Naive thymus-derived CD4-positive, alpha-beta T cell (primary cell): ENCODE measurements at regions of chr19 and their contacts with region 1.

Region 1: DNA sequence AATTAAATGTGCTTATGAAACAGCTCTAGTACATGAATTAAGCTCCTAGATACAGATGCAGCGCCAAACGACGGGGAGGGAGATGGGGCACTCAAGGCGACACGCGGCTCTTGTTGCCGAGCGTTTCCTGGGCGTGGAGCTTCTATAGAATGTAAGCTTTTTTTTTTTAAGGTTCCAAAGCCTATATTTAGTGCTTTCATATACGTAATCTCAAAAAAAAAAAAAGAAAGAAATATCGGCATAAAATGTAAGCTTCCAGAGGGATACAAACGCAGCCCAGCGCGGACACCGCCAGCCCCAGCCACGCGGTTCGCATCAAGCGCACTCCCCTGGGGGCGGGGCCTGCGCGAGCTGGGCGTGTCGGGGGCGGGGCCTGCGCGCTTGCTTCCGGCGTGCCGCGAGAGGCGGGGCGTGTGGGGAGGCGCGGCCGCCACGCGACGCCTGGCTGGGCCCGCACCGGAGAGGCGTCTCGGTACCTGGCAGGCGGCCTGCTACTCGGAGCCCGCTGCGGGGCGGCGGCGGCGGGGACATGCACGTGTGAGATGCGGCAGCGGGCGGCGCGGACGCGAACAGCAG is at the start of gene URI1:
- DNase-seq: peak; percentile 86 to 99 (median 93)
- ATAC-seq: peak; percentile 98
- H3K4me3 ChIP-seq: peak within 1 kb of the TSS; percentile 95
- H3K4me3 Mint-ChIP-seq: peak within 1 kb of the TSS; percentile 92 to 99 (median 96)
- H3K27ac ChIP-seq: peak within 1 kb of the TSS; percentile 88
- H3K27ac Mint-ChIP-seq: peak within 1 kb of the TSS; percentile 86 to 96 (median 94)
- H3K4me1 ChIP-seq: peaks cover 27 to 35% of the 10 kb centered on the region in 2 donors
- H3K4me1 Mint-ChIP-seq: peaks cover 35 to 55% (median 47%) of the 10 kb centered on the region in 7 donors
- H3K27me3 ChIP-seq: no peaks in the 10 kb centered on the region
- H3K27me3 Mint-ChIP-seq: peaks cover 0 to 4% (median 0%) of the 10 kb centered on the region in 5 donors
- total RNA-seq, gene URI1: 55.0 to 106 (median 71.8) TPM

Region 2: GRCh38 chr19:29040951-29041350 is 901.0 kb before region 1 on chr19:
- CTCF ChIA-PET with region 1: no interaction called
- POLR2A ChIA-PET with region 1: no interaction called
- intact Hi-C with region 1: no loop called
- DNase-seq: no peak
- ATAC-seq: no peak
- H3K4me3 ChIP-seq: no peak overlapping the region
- H3K4me3 Mint-ChIP-seq: no peak overlapping the region
- H3K27ac ChIP-seq: no peak overlapping the region
- H3K27ac Mint-ChIP-seq: no peak overlapping the region
- H3K4me1 ChIP-seq: no peaks in the 10 kb centered on the region
- H3K4me1 Mint-ChIP-seq: no peaks in the 10 kb centered on the region
- H3K27me3 ChIP-seq: no peaks in the 10 kb centered on the region
- H3K27me3 Mint-ChIP-seq: peaks cover 0 to 30% (median 10%) of the 10 kb centered on the region in 5 donors

Region 3: DNA sequence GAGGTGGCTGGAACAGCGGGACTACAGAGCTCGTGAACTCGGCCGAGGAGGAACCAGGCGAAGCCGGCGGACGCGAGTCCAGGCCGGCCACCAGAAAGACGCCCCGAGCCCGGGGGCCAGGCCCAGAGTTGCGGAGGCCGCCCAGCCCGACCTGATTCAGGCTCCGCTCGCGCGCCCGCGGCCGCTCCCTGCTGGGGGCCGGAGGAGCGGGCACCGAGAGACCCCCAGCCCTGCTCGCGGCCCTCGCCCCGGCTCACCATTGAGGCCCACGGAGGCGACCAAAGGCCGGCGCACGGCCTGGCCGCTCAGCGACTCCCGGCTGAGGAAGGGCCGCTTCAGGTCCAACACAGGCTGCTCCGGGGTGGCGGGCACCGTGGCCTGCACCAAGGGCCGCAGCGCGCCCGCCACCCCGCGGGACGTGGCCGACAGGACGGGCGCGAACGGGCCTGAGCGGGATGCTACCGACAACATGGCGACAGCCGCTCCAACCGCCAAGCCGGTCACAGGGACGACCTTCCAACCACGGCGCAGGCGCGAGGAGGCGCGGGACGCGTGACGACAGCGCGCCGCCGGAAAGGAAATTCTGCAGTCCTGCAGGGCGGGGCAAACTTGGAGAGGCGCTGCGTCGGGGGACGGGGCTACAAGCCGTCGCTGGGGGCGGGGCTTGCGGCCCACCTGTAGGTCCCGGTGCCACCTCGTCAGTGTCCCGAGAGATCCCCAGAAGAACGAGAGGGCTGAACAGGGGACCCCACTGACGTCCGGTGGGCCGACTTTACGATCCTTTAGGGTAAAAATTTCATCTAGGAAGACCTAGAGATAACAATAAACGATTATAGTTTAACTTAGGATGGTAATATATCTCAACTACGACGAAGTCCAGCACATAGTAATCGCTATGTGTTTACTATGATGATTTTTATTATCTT is 729.0 kb before region 1 on chr19 and contains the start of gene UQCRFS1:
- CTCF ChIA-PET with region 1: no interaction called
- POLR2A ChIA-PET with region 1: no interaction called
- intact Hi-C with region 1: loop called (anchors 1 to 5 kb)
- DNase-seq: peak; percentile 92 to 96 (median 95)
- ATAC-seq: peak; percentile 97
- H3K4me3 ChIP-seq: peak within 1 kb of the TSS; percentile 94
- H3K4me3 Mint-ChIP-seq: peak within 1 kb of the TSS; percentile 89 to 99 (median 96)
- H3K27ac ChIP-seq: peak within 1 kb of the TSS; percentile 96
- H3K27ac Mint-ChIP-seq: peak within 1 kb of the TSS; percentile 88 to 99 (median 98)
- H3K4me1 ChIP-seq: peaks cover 9 to 34% of the 10 kb centered on the region in 2 donors
- H3K4me1 Mint-ChIP-seq: peaks cover 32 to 54% (median 50%) of the 10 kb centered on the region in 7 donors
- H3K27me3 ChIP-seq: no peaks in the 10 kb centered on the region
- H3K27me3 Mint-ChIP-seq: peaks cover 0 to 12% (median 4%) of the 10 kb centered on the region in 5 donors
- total RNA-seq, gene UQCRFS1: 16.1 to 28.3 (median 23.9) TPM

Region 4: GRCh38 chr19:29671393-29672160 is 270.3 kb before region 1 on chr19:
- CTCF ChIA-PET with region 1: no interaction called
- POLR2A ChIA-PET with region 1: interaction called, 5 read pairs
- intact Hi-C with region 1: loop called in 1 of 2 experiments (anchors 5 kb)
- DNase-seq: peak in 8 of 9 donors; percentile 65 to 83 (median 76)
- ATAC-seq: peak; percentile 72
- H3K4me3 ChIP-seq: peak overlapping the region; percentile 50
- H3K4me3 Mint-ChIP-seq: peak overlapping the region; percentile 78 to 93 (median 82)
- H3K27ac ChIP-seq: peak overlapping the region; percentile 94
- H3K27ac Mint-ChIP-seq: peak overlapping the region; percentile 90 to 100 (median 98)
- H3K4me1 ChIP-seq: peaks cover 95 to 96% of the 10 kb centered on the region in 2 donors
- H3K4me1 Mint-ChIP-seq: peaks cover 60 to 96% (median 83%) of the 10 kb centered on the region in 7 donors
- H3K27me3 ChIP-seq: no peaks in the 10 kb centered on the region
- H3K27me3 Mint-ChIP-seq: no peaks in the 10 kb centered on the region

Region 5: DNA sequence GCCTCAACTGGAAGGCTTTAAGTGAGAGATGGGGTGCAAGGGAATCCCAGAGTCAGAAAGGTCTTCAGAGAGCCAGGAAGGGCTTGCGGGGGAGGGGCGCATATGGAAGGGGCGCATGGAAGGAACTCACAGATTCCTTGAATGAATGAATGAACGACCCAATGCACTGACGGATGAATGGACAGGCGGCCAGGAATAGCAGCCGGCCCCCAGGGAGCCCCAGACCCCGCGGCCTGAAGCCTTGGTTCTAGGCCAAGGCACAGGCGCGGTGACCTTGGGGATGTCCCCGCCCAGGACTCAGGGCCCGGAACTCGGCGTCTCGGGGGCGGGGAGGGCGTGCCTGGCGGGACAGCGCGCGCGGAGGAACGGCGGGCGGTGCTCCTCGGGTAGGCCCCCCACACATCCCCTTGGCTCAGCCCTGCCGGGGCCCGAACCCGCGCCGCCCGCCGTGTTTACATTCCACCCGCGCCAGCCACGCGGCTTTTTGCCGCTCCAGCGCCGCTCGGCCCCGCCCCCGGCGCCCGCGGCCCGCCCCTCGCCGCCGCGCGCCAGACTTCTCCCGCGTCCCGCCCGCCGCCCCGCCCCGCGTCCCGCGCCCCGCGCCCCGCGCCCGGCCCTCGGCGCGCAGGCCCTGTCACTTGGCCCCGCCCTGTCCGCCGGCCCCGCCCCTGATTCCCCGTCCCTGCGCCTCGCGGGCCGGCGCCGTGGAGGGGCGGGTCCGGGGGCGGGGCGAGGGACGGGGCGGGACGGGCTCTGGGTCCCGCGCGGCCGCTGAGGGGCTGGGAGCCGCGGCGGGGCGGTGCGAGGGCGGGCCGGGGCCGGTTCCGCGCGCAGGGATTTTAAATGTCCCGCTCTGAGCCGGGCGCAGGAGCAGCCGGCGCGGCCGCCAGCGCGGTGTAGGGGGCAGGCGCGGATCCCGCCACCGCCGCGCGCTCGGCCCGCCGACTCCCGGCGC is 130.5 kb before region 1 on chr19 and contains the start of gene CCNE1:
- CTCF ChIA-PET with region 1: no interaction called
- POLR2A ChIA-PET with region 1: no interaction called
- intact Hi-C with region 1: loop called (anchors 1 kb)
- DNase-seq: peak; percentile 85 to 98 (median 91)
- ATAC-seq: peak; percentile 98
- H3K4me3 ChIP-seq: peak within 1 kb of the TSS; percentile 48
- H3K4me3 Mint-ChIP-seq: peak within 1 kb of the TSS; percentile 83 to 96 (median 90)
- H3K27ac ChIP-seq: peak within 1 kb of the TSS; percentile 69
- H3K27ac Mint-ChIP-seq: peak within 1 kb of the TSS; percentile 56 to 94 (median 85)
- H3K4me1 ChIP-seq: no peaks in the 10 kb centered on the region
- H3K4me1 Mint-ChIP-seq: peaks cover 0 to 36% (median 11%) of the 10 kb centered on the region in 7 donors
- H3K27me3 ChIP-seq: no peaks in the 10 kb centered on the region
- H3K27me3 Mint-ChIP-seq: no peaks in the 10 kb centered on the region
- total RNA-seq, gene CCNE1: 5.3 to 36.1 (median 6.6) TPM

Region 6: DNA sequence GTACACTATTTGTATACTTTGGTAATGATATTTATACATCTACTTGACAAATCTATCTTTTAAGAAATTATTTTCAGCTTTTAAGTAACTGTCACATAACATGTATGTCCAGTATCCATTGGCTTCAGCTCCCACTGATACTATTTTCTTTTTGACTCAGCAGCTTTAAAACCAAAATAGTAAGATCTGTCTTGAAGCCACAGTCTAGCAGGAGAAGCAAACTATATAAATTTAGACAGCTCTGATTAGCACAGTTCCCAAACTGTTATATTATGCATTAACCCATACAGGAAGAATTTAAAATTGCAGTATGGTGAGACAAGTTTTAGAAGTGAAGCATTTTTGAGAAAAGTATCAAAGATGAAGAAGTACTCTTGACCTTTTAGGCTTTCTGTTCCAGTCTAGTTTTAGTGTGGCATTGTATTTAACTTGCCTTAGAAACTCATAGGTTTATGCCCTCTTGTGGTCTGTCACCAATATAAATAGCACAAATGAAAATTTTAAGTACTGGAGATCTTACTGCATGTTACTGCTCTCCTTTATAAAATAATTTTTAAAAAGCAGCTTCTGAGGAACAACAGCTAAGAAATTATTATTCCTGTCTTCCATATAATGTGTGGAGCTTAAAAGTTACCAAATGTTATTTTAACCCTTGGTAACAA is 24.8 kb after region 1 on chr19:
- CTCF ChIA-PET with region 1: interaction called, 3 read pairs
- POLR2A ChIA-PET with region 1: interaction called, 7 read pairs
- intact Hi-C with region 1: loop called in 1 of 2 experiments (anchors 1 kb)
- DNase-seq: peak in 1 of 9 donors; percentile 15
- ATAC-seq: peak; percentile 42
- H3K4me3 ChIP-seq: no peak overlapping the region
- H3K4me3 Mint-ChIP-seq: peak overlapping the region in 6 of 10 donors; percentile 1 to 76 (median 49)
- H3K27ac ChIP-seq: peak overlapping the region; percentile 27
- H3K27ac Mint-ChIP-seq: peak overlapping the region in 3 of 9 donors; percentile 3 to 32 (median 5)
- H3K4me1 ChIP-seq: peaks cover 31 to 44% of the 10 kb centered on the region in 2 donors
- H3K4me1 Mint-ChIP-seq: peaks cover 41 to 97% (median 88%) of the 10 kb centered on the region in 7 donors
- H3K27me3 ChIP-seq: no peaks in the 10 kb centered on the region
- H3K27me3 Mint-ChIP-seq: no peaks in the 10 kb centered on the region

Region 7: DNA sequence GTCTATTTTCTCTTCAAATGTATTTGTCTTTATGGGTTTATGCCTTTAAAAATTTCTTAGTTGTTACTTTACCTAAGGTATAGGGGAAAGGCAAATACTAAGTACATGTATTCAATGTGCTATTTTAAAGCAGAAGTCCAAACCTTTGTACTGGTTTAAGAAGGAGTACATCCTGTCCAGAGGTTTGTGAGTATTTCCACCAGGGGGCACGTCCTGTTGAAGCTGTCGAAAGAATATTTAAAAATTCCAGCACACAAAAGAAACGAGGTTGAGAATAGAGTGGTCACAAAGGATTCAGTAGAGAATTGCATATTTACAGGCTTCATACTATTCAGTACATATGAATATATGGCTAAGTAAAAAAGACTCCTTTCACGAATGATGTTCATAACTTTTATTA is 59.9 kb after region 1 on chr19:
- CTCF ChIA-PET with region 1: no interaction called
- POLR2A ChIA-PET with region 1: interaction called, 3 read pairs
- intact Hi-C with region 1: loop called (anchors 5 kb)
- DNase-seq: no peak
- ATAC-seq: no peak
- H3K4me3 ChIP-seq: no peak overlapping the region
- H3K4me3 Mint-ChIP-seq: peak overlapping the region in 1 of 10 donors; percentile 47
- H3K27ac ChIP-seq: no peak overlapping the region
- H3K27ac Mint-ChIP-seq: peak overlapping the region in 1 of 9 donors; percentile 23
- H3K4me1 ChIP-seq: peaks cover 8 to 17% of the 10 kb centered on the region in 2 donors
- H3K4me1 Mint-ChIP-seq: peaks cover 42 to 95% (median 77%) of the 10 kb centered on the region in 7 donors
- H3K27me3 ChIP-seq: no peaks in the 10 kb centered on the region
- H3K27me3 Mint-ChIP-seq: no peaks in the 10 kb centered on the region

Region 8: GRCh38 chr19:30029721-30030510 is 88.0 kb after region 1 on chr19:
- CTCF ChIA-PET with region 1: no interaction called
- POLR2A ChIA-PET with region 1: no interaction called
- intact Hi-C with region 1: no loop called
- DNase-seq: no peak
- ATAC-seq: no peak
- H3K4me3 ChIP-seq: no peak overlapping the region
- H3K4me3 Mint-ChIP-seq: peak overlapping the region in 1 of 10 donors; percentile 18
- H3K27ac ChIP-seq: no peak overlapping the region
- H3K27ac Mint-ChIP-seq: peak overlapping the region in 2 of 9 donors; percentile 13 to 45
- H3K4me1 ChIP-seq: no peaks in the 10 kb centered on the region
- H3K4me1 Mint-ChIP-seq: peaks cover 1 to 28% (median 13%) of the 10 kb centered on the region in 7 donors
- H3K27me3 ChIP-seq: no peaks in the 10 kb centered on the region
- H3K27me3 Mint-ChIP-seq: no peaks in the 10 kb centered on the region